ENCODE measurements at regions of chr20 and their contacts with region 1.

Region 1: DNA sequence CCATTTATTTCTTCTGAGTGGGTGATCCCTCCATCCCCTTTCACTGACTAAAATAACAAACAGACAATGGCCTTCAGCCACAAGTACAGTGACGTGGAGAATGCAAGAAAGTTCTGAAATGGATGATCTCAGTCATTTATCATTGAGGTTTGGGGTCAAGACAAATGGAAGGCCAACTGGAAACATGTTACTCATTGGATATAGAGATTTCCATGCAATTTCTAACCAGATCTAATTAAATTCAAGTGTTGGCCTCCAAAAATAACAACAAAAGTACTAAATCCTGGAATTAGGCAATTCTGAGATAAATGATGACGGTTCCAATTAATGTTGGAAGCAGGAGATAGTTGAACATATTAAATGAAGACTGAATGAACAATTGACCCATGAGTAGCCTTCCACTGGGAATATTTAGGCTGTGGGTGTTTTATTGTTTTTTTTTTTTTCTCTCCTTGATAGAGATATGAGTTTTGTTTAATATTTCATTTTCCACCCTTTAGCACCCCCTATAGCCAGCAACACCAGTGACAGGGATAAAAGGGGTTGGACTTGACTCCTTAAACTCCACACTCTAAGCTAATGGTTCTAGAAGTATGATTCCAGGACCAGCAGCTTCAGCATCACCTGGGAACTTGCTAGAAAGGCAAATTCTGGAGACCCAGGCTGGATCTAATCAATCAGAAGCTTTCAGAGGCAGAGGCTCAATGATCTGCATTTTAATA is 112.8 kb downstream of the BCAS1 start:
- DNase-seq: no peak
- ATAC-seq: no peak
- H3K4me3 ChIP-seq: no peak overlapping the region
- H3K4me3 Mint-ChIP-seq: no peak overlapping the region
- H3K27ac ChIP-seq: no peak overlapping the region
- H3K27ac Mint-ChIP-seq: no peak overlapping the region
- H3K4me1 ChIP-seq: no peaks in the 10 kb centered on the region
- H3K4me1 Mint-ChIP-seq: no peaks in the 10 kb centered on the region
- H3K27me3 ChIP-seq: peaks cover 0 to 4% of the 10 kb centered on the region in 2 experiments
- H3K27me3 Mint-ChIP-seq: no peaks in the 10 kb centered on the region
- CTCF ChIP-seq: no peak

Region 2: DNA sequence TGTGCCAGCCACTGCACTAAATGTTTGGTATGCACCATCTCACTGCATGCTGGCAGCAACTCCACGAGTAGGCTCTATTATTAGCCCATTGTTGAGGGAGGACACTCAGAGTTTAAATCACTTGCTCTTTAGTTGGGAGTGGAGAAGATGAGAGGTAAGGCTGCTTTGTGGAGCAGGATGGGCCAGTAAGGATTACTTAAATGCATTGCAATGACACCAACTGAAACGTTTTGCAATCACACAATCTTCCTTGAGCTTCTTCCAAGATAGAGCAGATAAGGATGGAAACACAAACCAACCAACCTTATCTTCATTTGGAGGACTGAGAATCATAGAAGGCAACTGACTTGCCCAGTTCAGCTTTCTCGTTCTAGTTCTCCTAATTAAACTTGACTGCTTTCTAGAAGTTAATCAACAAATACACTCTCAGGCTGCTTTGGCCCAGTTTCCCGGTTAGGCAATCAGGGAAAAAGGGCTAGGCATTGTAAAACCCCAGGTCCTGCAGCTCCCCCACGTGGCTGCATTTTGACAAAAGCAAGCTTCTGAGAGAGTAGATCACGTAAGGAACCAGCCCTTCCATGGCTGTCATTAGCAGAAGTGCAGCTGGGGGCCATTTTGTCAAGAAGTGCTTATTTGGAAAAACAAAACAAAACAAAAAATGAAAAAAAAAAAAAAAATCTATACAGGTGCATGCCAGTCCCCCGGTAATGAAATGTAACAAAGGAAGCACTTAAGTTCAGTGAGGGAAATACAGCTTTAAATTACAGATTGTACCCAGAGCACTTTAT is 17.8 kb before region 1 on chr20:
- CTCF ChIA-PET with region 1: interaction called, 6 read pairs
- POLR2A ChIA-PET with region 1: no interaction called
- intact Hi-C with region 1: loop called in 1 of 2 experiments (anchors 1 kb)
- DNase-seq: peak; percentile 35 to 85 (median 56)
- ATAC-seq: peak; percentile 75
- H3K4me3 ChIP-seq: no peak overlapping the region
- H3K4me3 Mint-ChIP-seq: no peak overlapping the region
- H3K27ac ChIP-seq: no peak overlapping the region
- H3K27ac Mint-ChIP-seq: no peak overlapping the region
- H3K4me1 ChIP-seq: peaks cover 17% of the 10 kb centered on the region
- H3K4me1 Mint-ChIP-seq: peaks cover 47% of the 10 kb centered on the region
- H3K27me3 ChIP-seq: no peaks in the 10 kb centered on the region
- H3K27me3 Mint-ChIP-seq: no peaks in the 10 kb centered on the region
- CTCF ChIP-seq: peak; percentile 76

Region 3: GRCh38 chr20:54284934-54285704 is 327.5 kb after region 1 on chr20:
- CTCF ChIA-PET with region 1: no interaction called
- POLR2A ChIA-PET with region 1: no interaction called
- intact Hi-C with region 1: no loop called
- DNase-seq: no peak
- ATAC-seq: no peak
- H3K4me3 ChIP-seq: no peak overlapping the region
- H3K4me3 Mint-ChIP-seq: no peak overlapping the region
- H3K27ac ChIP-seq: no peak overlapping the region
- H3K27ac Mint-ChIP-seq: no peak overlapping the region
- H3K4me1 ChIP-seq: no peaks in the 10 kb centered on the region
- H3K4me1 Mint-ChIP-seq: no peaks in the 10 kb centered on the region
- H3K27me3 ChIP-seq: no peaks in the 10 kb centered on the region
- H3K27me3 Mint-ChIP-seq: peaks cover 5% of the 10 kb centered on the region
- CTCF ChIP-seq: no peak

Measured in CD4-positive, alpha-beta T cell (primary cell).